Activated naive CD4-positive, alpha-beta T cell treated with anti-CD3 and anti-CD28 coated beads for 36 hours (primary cell): ENCODE measurements at regions of chr16 and their contacts with region 1.

Region 1: GRCh38 chr16:5252791-5253190 is 155.2 kb upstream of the EEF2KMT start:
- DNase-seq: no peak
- H3K4me3 Mint-ChIP-seq: no peak overlapping the region
- H3K27ac Mint-ChIP-seq: no peak overlapping the region
- H3K4me1 Mint-ChIP-seq: no peaks in the 10 kb centered on the region
- H3K27me3 Mint-ChIP-seq: peaks cover 5% of the 10 kb centered on the region

Region 2: GRCh38 chr16:4517812-4518680 is 734.7 kb before region 1 on chr16:
- CTCF ChIA-PET with region 1: no interaction called
- intact Hi-C with region 1: no loop called
- DNase-seq: no peak
- H3K4me3 Mint-ChIP-seq: no peak overlapping the region
- H3K27ac Mint-ChIP-seq: no peak overlapping the region
- H3K4me1 Mint-ChIP-seq: peaks cover 30% of the 10 kb centered on the region
- H3K27me3 Mint-ChIP-seq: no peaks in the 10 kb centered on the region

Region 3: GRCh38 chr16:4624015-4624826 is 628.6 kb before region 1 on chr16 and contains the start of gene MGRN1:
- CTCF ChIA-PET with region 1: no interaction called
- intact Hi-C with region 1: no loop called
- DNase-seq: peak; percentile 96
- H3K4me3 Mint-ChIP-seq: peak within 1 kb of the TSS; percentile 97
- H3K27ac Mint-ChIP-seq: peak within 1 kb of the TSS; percentile 99
- H3K4me1 Mint-ChIP-seq: peaks cover 30% of the 10 kb centered on the region
- H3K27me3 Mint-ChIP-seq: no peaks in the 10 kb centered on the region
- total RNA-seq, gene MGRN1: 46.3 to 48.8 TPM

Region 4: GRCh38 chr16:5302372-5303114 is 49.8 kb after region 1 on chr16:
- CTCF ChIA-PET with region 1: no interaction called
- intact Hi-C with region 1: loop called (anchors 2 kb)
- DNase-seq: no peak
- H3K4me3 Mint-ChIP-seq: no peak overlapping the region
- H3K27ac Mint-ChIP-seq: no peak overlapping the region
- H3K4me1 Mint-ChIP-seq: no peaks in the 10 kb centered on the region
- H3K27me3 Mint-ChIP-seq: peaks cover 9% of the 10 kb centered on the region